Right ventricle myocardium superior (tissue), 1 donor: ENCODE measurements at regions of chr16 and their contacts with region 1.

Region 1: DNA sequence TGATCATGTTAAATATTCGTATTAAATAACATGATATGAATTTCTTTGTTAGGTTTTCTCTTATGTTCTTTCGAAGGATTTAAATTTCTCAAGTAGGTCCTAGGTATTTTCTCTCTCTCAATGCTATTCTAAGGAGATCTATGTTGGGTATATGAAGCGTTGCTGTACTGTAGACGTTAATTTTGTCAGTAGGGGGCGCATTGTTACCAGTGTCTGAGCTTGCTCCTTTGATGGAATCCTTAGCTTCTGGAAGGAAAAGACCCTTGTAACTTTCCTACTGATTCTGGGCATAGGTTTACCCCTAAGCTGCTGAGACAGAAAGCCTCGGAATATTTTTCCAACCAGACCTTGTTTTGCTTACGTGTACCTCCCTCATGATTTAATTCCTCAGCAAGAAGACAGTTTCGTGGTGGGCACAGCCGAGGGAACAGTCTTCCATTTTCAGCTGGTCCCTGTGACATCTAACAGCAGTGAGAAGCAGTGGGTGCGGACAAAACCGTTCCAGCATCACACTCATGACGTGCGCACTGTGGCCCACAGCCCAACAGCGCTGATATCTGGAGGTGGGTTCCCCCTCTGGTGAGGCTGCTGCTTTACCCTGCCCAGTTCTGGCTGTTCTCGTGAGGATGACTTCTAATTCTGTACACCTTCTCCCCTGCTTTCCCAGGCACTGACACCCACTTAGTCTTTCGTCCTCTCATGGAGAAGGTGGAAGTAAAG is 17.9 kb downstream of the UTP4 start:
- DNase-seq: no peak
- ATAC-seq: peak; percentile 89

Region 2: GRCh38 chr16:69286941-69287713 is 136.8 kb after region 1 on chr16:
- intact Hi-C with region 1: loop called (anchors 2 kb)
- DNase-seq: peak; percentile 82
- ATAC-seq: peak; percentile 93

Region 3: GRCh38 chr16:69381231-69381630 is 230.9 kb after region 1 on chr16:
- intact Hi-C with region 1: no loop called
- DNase-seq: no peak
- ATAC-seq: no peak